ENCODE measurements at regions of chr1 and their contacts with region 1.

Region 1: DNA sequence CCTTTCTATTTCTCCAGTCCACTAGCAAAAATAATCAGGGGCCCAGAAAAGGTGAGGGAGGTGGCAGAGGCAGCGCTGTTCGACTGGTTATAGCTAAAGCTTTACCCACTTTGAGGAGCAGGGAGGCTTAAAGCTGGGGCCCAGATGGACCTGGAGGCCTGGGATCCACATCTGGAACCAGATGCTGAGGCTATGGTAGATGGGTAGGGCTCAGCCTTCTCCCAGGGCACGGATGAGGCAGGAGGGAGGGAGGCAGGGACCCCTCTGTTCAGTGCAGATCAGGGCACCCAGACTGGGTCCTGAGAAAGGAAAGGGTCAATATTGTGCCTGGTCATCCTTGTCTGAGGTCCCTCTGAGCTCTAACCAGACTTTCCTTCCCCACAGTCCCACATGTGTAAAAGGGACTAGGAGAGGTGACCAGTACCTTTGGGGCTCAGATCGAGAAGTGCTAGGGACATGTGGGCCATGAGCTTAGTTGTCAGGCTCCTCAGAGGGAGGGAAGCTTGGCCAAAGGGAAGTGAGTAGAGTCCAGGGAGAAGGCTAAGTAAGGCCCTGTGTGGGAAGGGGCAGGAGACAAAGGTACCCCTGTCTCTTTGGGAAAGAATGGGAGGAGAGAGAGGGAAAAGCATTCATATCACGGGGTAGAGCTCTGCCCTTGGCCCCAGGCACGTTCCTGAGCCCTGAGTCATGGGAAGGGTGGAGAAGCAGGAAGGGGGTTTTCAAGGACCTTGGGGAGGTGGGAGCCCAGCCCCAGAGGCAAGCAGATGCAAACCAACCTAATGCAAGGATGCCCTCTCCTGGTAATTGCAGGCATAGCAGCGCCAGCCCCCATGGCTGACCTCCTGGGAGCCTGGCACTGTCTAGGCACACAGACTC is 15.4 kb downstream of the LMNA start:
- DNase-seq: peak; percentile 84
- ATAC-seq: no peak
- H3K4me3 Mint-ChIP-seq: no peak overlapping the region
- H3K27ac Mint-ChIP-seq: no peak overlapping the region
- H3K4me1 Mint-ChIP-seq: peaks cover 52% of the 10 kb centered on the region
- H3K27me3 Mint-ChIP-seq: peaks cover 7% of the 10 kb centered on the region

Region 2: DNA sequence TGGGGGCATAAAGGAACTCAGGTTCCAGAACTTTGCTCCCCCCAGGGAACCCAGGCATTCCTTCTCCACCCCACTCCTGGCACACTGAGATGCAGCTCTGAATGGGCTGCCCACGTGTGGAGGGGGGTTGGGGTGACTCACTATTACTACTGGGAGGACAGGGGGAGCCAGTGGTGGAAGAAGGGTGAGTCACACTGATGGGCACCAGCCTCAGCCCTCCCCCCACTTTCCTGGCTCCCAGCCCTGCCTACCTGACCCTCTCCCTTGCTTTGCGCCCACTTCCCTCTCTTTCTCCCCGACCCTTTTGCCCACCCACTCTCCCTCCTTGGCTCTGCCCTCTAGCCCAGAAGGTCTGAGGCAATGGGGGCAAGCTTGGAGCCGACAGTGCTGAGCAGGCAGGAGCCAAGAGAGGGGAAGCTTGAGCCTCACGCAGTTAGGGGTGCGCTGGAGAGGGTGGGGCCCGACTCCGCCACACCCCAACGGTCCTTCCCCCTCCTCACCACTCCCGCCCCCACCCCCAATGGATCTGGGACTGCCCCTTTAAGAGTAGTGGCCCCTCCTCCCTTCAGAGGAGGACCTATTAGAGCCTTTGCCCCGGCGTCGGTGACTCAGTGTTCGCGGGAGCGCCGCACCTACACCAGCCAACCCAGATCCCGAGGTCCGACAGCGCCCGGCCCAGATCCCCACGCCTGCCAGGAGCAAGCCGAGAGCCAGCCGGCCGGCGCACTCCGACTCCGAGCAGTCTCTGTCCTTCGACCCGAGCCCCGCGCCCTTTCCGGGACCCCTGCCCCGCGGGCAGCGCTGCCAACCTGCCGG is 15.6 kb before region 1 on chr1 and contains the start of gene LMNA:
- CTCF ChIA-PET with region 1: interaction called, 127 read pairs
- DNase-seq: peak; percentile 81
- ATAC-seq: peak; percentile 90
- H3K4me3 Mint-ChIP-seq: peak within 1 kb of the TSS; percentile 83
- H3K27ac Mint-ChIP-seq: peak within 1 kb of the TSS; percentile 75
- H3K4me1 Mint-ChIP-seq: peaks cover 25% of the 10 kb centered on the region
- H3K27me3 Mint-ChIP-seq: peaks cover 34% of the 10 kb centered on the region
- total RNA-seq, gene LMNA: 37.3 to 41.9 TPM

Region 3: DNA sequence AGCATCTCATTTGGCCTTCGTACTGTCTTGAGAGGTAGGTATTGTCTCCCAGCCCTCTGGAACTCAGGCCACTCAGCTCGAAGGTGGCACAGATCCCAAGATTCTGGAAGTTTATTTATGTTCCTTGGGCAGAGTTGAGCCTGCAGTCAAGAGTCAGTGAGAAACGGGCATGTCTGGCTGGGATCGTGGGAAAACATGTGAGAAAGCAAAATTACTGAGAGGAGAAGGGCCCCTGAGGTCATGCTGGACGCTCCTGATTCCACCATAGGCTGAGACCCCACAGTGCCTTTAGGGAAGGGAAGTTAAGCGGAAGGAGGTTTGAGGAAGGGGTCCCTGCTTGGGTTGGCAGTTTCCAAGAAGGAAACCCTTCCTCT is 10.9 kb after region 1 on chr1:
- CTCF ChIA-PET with region 1: interaction called, 24 read pairs
- DNase-seq: no peak
- ATAC-seq: no peak
- H3K4me3 Mint-ChIP-seq: no peak overlapping the region
- H3K27ac Mint-ChIP-seq: no peak overlapping the region
- H3K4me1 Mint-ChIP-seq: peaks cover 5% of the 10 kb centered on the region
- H3K27me3 Mint-ChIP-seq: no peaks in the 10 kb centered on the region

Region 4: DNA sequence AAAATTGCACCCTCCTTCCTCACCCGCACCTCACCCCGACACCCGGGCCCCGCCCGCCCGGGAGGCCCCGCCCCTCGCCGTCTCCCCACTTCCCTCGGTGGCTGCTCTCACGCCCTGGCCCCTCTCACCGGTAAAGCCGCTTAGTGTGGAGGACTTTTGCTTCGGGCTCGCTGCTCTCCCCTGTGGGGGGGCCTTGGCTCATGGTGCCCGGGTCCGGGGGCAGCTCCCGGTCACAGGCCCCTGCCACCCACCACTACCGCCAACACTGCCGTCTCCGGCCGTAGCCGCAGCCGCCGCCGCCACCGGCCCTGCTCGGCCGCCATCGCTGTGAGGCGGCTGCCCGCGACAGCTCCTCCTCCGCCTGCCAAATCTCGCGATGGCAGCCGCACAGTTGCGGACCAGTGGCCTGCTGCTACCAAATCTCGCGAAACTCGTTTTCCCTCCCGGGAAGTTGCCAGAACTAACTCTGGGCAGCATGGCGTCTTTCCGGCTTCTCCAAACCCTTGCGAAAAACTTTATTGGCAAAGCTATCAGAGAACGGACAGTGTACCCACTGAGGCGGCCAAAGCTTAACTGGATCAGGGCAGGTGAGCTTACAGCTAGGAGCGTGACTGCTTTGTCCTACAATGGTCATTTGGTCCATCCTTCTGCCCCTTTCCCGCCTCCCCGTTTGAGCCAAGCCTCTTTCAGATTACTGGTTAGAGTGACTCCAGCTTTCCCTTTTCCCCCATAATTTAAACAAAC is 152.7 kb after region 1 on chr1 and contains the start of gene SMG5:
- CTCF ChIA-PET with region 1: interaction called, 11 read pairs
- DNase-seq: peak; percentile 99
- ATAC-seq: peak; percentile 92
- H3K4me3 Mint-ChIP-seq: peak within 1 kb of the TSS; percentile 94
- H3K27ac Mint-ChIP-seq: peak within 1 kb of the TSS; percentile 91
- H3K4me1 Mint-ChIP-seq: peaks cover 39% of the 10 kb centered on the region
- H3K27me3 Mint-ChIP-seq: no peaks in the 10 kb centered on the region
- total RNA-seq, gene SMG5: 89.4 to 103 TPM

Measured in activated CD8-positive, alpha-beta memory T cell treated with anti-CD3 and anti-CD28 coated beads, Interleukin-2, amount 10 ng/mL, durations not matched to agents 7 days and 5 days (primary cell).